A673 (cell line): ENCODE measurements at regions of chr12 and their contacts with region 1.

Region 1: DNA sequence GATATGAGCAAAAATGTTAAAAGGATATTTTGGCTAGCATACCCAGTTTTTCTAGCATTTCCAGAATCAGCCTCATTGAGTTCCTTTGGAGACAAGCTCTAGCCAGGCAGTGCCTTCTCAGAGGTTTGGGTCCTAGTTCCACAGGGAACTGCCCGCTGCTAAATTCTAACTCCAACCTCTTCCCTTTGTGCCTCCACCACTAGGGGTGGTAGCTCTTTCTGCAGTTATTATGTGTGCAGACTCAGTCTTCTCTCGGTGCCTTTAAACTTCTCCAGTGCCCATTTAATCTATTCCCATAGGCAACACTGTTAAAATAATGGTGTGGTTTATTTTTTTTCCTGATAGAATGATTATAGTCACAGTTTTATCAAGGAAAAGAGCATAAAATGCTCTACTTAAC is 21.5 kb upstream of the SLC25A3 start:
- DNase-seq: peak; percentile 27
- H3K4me3 ChIP-seq: no peak overlapping the region
- H3K27ac ChIP-seq: no peak overlapping the region
- H3K4me1 ChIP-seq: no peaks in the 10 kb centered on the region
- H3K27me3 ChIP-seq: no peaks in the 10 kb centered on the region
- CTCF ChIP-seq: peak; percentile 47

Region 2: DNA sequence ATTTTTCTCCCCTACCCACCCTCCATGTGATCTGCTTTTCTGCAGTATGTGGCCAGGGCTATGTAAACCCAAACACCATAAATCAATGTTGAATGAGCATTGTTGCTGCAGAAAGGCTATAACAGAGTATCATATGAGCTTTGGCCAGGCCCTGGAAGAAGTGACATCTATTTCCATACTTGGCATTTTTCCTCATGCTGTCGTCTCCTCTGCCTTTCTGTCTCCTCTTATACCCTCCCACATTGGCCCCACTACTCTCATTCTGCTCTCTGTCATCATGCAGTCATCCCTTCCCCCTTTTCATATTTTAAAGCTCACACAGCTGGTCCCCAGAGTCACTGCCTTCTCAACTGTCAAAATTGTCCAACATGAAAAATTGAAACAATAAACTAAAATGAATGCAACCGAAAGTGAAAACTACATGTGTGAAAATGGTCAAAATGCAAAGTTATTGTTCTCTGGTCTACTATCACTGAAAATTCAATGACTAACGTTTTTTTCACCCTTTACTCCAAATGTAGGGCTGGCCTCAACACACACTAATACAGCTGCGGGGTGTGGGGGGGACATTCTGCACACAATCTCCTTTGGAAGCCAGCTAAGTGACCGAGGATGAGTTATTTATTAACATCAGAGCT is 347.3 kb before region 1 on chr12:
- CTCF ChIA-PET with region 1: no interaction called
- POLR2A ChIA-PET with region 1: no interaction called
- intact Hi-C with region 1: no loop called
- DNase-seq: no peak
- H3K4me3 ChIP-seq: no peak overlapping the region
- H3K27ac ChIP-seq: no peak overlapping the region
- H3K4me1 ChIP-seq: peaks cover 16% of the 10 kb centered on the region
- H3K27me3 ChIP-seq: no peaks in the 10 kb centered on the region
- CTCF ChIP-seq: no peak

Region 3: DNA sequence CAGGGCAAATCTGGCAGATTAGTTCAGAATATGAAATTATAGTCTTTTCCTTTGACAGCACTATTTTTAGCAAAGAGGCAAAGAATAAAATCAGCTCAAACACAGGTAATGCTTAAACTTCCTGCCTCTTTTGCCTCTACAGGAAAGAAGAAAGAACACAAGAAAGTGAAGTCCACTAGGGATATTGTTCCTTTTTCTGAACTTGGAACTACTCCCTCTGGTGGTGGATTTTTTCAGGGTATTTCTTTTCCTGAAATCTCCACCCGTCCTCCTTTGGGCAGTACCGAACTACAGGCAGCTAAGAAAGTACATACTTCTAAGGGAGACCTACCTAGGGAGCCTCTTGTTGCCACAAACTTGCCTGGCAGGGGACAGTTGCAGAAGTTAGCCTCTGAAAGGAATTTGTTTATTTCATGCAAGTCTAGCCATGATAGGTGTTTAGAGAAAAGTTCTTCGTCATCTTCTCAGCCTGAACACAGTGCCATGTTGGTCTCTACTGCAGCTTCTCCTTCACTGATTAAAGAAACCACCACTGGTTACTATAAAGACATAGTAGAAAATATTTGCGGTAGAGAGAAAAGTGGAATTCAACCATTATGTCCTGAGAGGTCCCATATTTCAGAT is 39.2 kb before region 1 on chr12:
- CTCF ChIA-PET with region 1: no interaction called
- POLR2A ChIA-PET with region 1: interaction called, 15 read pairs
- intact Hi-C with region 1: no loop called
- DNase-seq: peak; percentile 74
- H3K4me3 ChIP-seq: no peak overlapping the region
- H3K27ac ChIP-seq: peak overlapping the region; percentile 72
- H3K4me1 ChIP-seq: peaks cover 20% of the 10 kb centered on the region
- H3K27me3 ChIP-seq: no peaks in the 10 kb centered on the region
- CTCF ChIP-seq: peak; percentile 66

Region 4: GRCh38 chr12:98653866-98654493 is 82.0 kb after region 1 on chr12:
- CTCF ChIA-PET with region 1: interaction called, 6 read pairs
- POLR2A ChIA-PET with region 1: no interaction called
- intact Hi-C with region 1: loop called (anchors 2 kb)
- DNase-seq: peak; percentile 81
- H3K4me3 ChIP-seq: no peak overlapping the region
- H3K27ac ChIP-seq: no peak overlapping the region
- H3K4me1 ChIP-seq: no peaks in the 10 kb centered on the region
- H3K27me3 ChIP-seq: no peaks in the 10 kb centered on the region
- CTCF ChIP-seq: peak; percentile 67

Region 5: GRCh38 chr12:98998697-98999299 is 426.8 kb after region 1 on chr12:
- CTCF ChIA-PET with region 1: interaction called, 9 read pairs
- POLR2A ChIA-PET with region 1: no interaction called
- intact Hi-C with region 1: loop called (anchors 5 kb)
- DNase-seq: peak; percentile 71
- H3K4me3 ChIP-seq: no peak overlapping the region
- H3K27ac ChIP-seq: no peak overlapping the region
- H3K4me1 ChIP-seq: peaks cover 6% of the 10 kb centered on the region
- H3K27me3 ChIP-seq: no peaks in the 10 kb centered on the region
- CTCF ChIP-seq: peak; percentile 76